HEK293 (cell line): ENCODE measurements at regions of chr22 and their contacts with region 1.

Region 1: GRCh38 chr22:50562523-50563412 is at the start of gene SYCE3:
- H3K4me3 ChIP-seq: peak within 1 kb of the TSS; percentile 55
- H3K27ac ChIP-seq: peak within 1 kb of the TSS; percentile 40; the same call in 1 of the 2 replicates
- H3K4me1 ChIP-seq: 0 out of 2 replicates have a peak, but pooled peaks cover 2% of the 10 kb centered on the region
- CTCF ChIP-seq: peak; percentile 97

Region 2: DNA sequence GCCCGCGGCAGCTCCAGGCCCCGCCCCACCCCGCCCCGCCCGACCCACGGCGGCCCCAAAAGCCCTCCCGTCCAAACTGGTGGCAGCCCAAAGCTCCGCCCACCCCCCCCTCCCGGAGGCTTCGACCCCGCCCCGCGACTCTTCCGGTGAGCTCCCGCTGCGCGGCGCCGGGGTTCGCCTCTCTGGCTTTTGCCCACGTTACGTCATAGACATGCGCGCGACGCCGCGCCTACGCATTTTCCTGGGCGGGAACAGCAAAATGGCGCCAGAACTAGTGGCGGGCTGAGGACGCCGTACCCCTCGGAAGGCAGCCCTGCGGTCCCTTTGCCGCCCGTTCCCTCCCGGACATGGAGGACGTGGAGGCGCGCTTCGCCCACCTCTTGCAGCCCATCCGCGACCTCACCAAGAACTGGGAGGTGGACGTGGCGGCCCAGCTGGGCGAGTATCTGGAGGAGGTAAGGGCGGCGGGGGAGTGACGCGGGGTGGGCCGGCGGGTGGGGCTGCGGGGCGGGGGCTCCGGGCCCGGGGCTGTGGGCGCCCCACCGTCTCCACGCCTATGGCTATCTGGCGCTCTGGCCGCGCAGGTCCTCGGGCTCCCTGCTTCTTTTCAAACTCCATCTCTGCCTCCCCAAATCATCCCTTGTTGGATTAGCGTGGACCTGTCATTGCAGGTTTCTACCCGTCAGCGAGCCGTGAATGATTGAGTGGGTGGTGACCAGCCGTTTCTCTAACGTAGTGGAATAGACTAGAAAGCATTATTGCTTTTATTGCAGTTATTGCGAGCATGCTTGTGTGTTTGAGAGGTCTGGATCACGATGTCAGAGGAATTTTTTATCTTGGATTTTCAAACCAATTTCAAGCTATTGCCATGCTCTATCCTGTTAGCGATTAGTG is 54.5 kb before region 1 on chr22 and contains the start of gene NCAPH2:
- CTCF ChIA-PET with region 1: interaction called, 10 read pairs
- POLR2A ChIA-PET with region 1: interaction called, 7 read pairs
- H3K4me3 ChIP-seq: peak within 1 kb of the TSS; percentile 100
- H3K27ac ChIP-seq: peak within 1 kb of the TSS; percentile 97
- H3K4me1 ChIP-seq: peaks cover 8% of the 10 kb centered on the region
- CTCF ChIP-seq: no peak

Region 3: GRCh38 chr22:50544078-50544745 is 18.6 kb before region 1 on chr22:
- CTCF ChIA-PET with region 1: interaction called, 11 read pairs
- POLR2A ChIA-PET with region 1: interaction called, 5 read pairs
- H3K4me3 ChIP-seq: no peak overlapping the region
- H3K27ac ChIP-seq: no peak overlapping the region
- H3K4me1 ChIP-seq: peaks cover 7% of the 10 kb centered on the region; the same call in 1 of the 2 replicates
- CTCF ChIP-seq: no peak

Region 4: GRCh38 chr22:50551160-50551752 is 11.5 kb before region 1 on chr22:
- CTCF ChIA-PET with region 1: interaction called, 21 read pairs
- POLR2A ChIA-PET with region 1: interaction called, 5 read pairs
- H3K4me3 ChIP-seq: no peak overlapping the region
- H3K27ac ChIP-seq: no peak overlapping the region
- H3K4me1 ChIP-seq: no peaks in the 10 kb centered on the region
- CTCF ChIP-seq: no peak

Region 5: DNA sequence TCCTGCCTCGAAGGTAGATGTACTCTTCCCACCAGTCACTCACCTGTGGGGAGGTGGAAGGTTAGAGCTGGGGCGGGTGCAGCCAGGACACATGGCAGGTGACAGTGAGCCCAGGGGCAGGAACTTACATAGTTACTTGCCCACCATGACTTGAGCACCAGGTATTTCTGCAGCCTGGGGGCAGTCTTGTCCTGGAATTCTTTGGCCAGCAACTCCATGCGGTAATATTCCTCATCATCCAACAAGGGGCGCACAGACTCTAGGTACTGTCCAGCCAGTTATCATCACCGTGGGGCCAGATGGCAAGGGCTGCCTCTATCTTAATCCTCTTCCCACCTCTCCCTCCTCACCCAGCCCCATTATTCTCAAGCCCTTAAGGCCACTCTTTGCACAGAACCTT is 13.3 kb after region 1 on chr22:
- CTCF ChIA-PET with region 1: interaction called, 35 read pairs
- POLR2A ChIA-PET with region 1: interaction called, 13 read pairs
- H3K4me3 ChIP-seq: no peak overlapping the region
- H3K27ac ChIP-seq: no peak overlapping the region
- H3K4me1 ChIP-seq: no peaks in the 10 kb centered on the region
- CTCF ChIP-seq: peak; percentile 90

Region 6: GRCh38 chr22:50582562-50583293 is 20.0 kb after region 1 on chr22 and contains the start of gene CHKB:
- CTCF ChIA-PET with region 1: interaction called, 12 read pairs
- POLR2A ChIA-PET with region 1: interaction called, 16 read pairs
- H3K4me3 ChIP-seq: peak within 1 kb of the TSS; percentile 80
- H3K27ac ChIP-seq: peak within 1 kb of the TSS; percentile 99
- H3K4me1 ChIP-seq: peaks cover 3% of the 10 kb centered on the region; the same call in 1 of the 2 replicates
- CTCF ChIP-seq: no peak

Region 7: DNA sequence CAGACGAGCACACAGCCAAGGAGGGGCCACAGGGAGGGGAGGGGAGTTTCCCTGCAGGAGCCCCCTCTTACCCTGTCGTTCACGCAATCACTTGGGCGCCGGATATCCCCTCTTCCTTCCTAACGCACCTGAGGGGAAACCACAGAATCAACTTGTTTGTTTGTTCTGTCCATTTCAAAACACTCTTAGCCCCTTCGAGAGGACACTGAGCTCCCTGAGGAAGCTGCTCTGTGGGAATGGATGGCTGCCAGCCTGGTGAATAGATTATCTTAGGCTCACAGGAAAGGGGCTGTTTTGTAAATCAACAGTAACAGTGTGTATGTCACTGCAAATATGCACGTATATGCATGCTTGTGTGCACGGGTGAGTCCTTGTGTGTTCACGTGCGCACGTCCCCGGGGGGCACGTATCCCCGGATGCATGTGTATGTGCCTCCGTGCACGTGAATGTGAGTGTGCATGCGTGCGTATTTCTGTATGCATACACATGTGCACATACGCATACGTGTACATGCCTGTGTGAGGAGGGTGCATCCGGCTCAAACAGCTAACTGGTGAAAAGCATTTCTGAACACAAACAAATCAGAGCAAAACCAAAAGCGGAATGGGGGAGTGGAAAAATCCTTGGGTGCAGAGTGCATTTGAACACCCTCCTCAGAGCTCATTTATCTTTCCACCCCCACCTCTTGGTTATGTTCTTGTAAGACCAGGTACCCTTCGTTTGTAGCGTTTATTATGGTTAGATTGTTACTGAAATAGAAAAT is 58.0 kb after region 1 on chr22:
- CTCF ChIA-PET with region 1: interaction called, 20 read pairs
- POLR2A ChIA-PET with region 1: interaction called, 4 read pairs
- H3K4me3 ChIP-seq: no peak overlapping the region
- H3K27ac ChIP-seq: no peak overlapping the region
- H3K4me1 ChIP-seq: peaks cover 7% of the 10 kb centered on the region; the same call in 1 of the 2 replicates
- CTCF ChIP-seq: no peak